CD4-positive, alpha-beta T cell (primary cell): ENCODE measurements at regions of chr19 and their contacts with region 1.

Region 1: DNA sequence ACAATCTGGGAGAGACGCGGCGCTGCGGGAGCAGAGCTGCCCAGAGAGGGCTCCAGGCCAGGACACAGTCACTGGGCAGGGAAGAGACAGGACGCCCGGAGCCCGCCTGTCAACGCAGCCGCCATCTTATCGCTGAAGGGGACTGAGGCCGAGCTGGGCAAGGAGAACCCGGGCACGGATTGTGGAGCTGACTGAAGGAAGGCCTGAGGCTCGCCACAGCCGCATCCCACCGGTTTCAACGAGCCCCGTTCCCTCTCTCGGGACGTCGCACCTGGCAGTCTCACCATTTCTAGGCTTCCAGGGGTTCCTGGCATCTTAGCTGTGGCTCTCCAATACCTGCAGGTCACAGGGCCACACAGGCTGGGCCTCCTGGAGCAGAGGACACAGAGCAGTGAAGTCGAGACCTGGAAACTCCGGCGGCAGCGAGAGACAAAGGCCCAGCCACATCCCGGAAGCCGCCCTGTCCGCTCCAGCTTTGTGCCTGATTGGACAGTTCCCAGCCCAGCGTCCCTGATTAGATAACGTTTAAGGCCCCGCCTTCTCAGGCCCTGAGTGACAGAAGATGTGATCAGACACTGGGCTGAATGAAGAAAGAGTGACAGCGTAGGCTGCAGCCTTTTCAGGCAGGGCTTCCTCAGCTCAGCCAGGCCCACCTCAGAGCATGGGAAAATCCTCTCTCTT is at the start of gene ZNF91:
- DNase-seq: peak; percentile 82 to 98 (median 85)
- ATAC-seq: peak; percentile 94
- H3K4me3 ChIP-seq: peak within 1 kb of the TSS; percentile 90
- H3K4me3 Mint-ChIP-seq: peak within 1 kb of the TSS; percentile 96
- H3K27ac ChIP-seq: peak within 1 kb of the TSS; percentile 88 to 95
- H3K27ac Mint-ChIP-seq: peak within 1 kb of the TSS; percentile 96
- H3K4me1 ChIP-seq: peaks cover 29% of the 10 kb centered on the region
- H3K4me1 Mint-ChIP-seq: peaks cover 50% of the 10 kb centered on the region
- H3K27me3 ChIP-seq: no peaks in the 10 kb centered on the region
- H3K27me3 Mint-ChIP-seq: no peaks in the 10 kb centered on the region
- CTCF ChIP-seq: no peak
- total RNA-seq, gene ZNF91: 95.5 to 99.3 TPM

Region 2: GRCh38 chr19:23249911-23250649 is 145.1 kb before region 1 on chr19 and contains the start of gene ZNF724:
- CTCF ChIA-PET with region 1: no interaction called
- POLR2A ChIA-PET with region 1: interaction called, 30 read pairs
- intact Hi-C with region 1: loop called in 1 of 2 experiments (anchors 10 kb)
- DNase-seq: peak; percentile 78 to 94 (median 82)
- ATAC-seq: peak; percentile 99
- H3K4me3 ChIP-seq: peak within 1 kb of the TSS; percentile 83
- H3K4me3 Mint-ChIP-seq: peak within 1 kb of the TSS; percentile 98
- H3K27ac ChIP-seq: peak within 1 kb of the TSS; percentile 29 to 55
- H3K27ac Mint-ChIP-seq: peak within 1 kb of the TSS; percentile 83
- H3K4me1 ChIP-seq: peaks cover 12% of the 10 kb centered on the region
- H3K4me1 Mint-ChIP-seq: peaks cover 13% of the 10 kb centered on the region
- H3K27me3 ChIP-seq: no peaks in the 10 kb centered on the region
- H3K27me3 Mint-ChIP-seq: no peaks in the 10 kb centered on the region
- CTCF ChIP-seq: no peak
- total RNA-seq, gene ZNF724: 4.2 to 5.5 TPM

Region 3: GRCh38 chr19:23440791-23441190 is 45.6 kb after region 1 on chr19:
- CTCF ChIA-PET with region 1: no interaction called
- POLR2A ChIA-PET with region 1: no interaction called
- intact Hi-C with region 1: loop called in 1 of 2 experiments (anchors 1 kb)
- DNase-seq: peak in 2 of 14 experiments; percentile 7 to 15
- ATAC-seq: no peak
- H3K4me3 ChIP-seq: no peak overlapping the region
- H3K4me3 Mint-ChIP-seq: no peak overlapping the region
- H3K27ac ChIP-seq: no peak overlapping the region
- H3K27ac Mint-ChIP-seq: no peak overlapping the region
- H3K4me1 ChIP-seq: no peaks in the 10 kb centered on the region
- H3K4me1 Mint-ChIP-seq: no peaks in the 10 kb centered on the region
- H3K27me3 ChIP-seq: no peaks in the 10 kb centered on the region
- H3K27me3 Mint-ChIP-seq: no peaks in the 10 kb centered on the region
- CTCF ChIP-seq: peak; percentile 20

Region 4: DNA sequence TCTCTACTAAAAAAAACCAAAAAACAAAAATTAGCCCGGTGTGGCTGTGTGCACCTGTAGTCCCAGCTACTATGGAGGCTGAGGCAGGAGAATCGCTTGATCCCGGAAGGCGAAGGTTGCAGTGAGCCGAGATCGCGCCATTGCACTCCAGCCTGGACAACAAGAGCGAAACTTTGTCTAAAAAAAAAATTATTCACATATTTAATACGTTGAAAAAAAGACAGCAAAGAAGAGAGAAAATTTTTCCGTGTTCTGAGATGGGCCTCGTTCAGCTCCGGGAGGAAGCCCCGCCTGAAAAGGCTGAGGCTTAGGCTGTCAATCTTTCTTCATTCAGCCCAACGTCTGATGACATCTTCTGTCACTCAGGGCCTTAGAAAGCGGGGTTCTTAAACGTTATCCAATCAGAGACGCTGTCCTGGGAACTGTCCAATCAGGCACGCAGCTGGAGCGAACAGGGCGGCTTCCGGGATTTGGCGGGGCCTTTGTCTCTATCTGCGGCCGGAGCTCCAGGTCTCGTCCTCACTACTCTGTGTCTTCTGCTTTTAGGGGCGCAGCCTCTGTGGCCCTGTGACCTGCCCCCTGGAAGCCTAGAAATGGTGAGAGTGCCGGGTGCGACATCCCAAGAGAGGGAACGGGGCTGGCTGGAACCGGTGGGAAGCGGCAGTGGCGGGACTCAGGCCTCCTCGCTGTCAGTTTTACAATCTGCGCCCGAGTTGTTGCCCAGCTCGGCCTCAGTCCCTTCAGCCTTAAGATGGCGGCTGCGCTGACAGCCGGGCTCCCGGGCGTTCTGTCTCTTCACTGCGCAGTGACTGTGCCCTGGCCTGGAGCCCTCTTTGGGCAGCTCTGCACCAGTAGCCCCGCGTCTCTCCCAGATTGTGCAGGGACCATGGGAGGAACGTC is 519.5 kb after region 1 on chr19 and contains the start of gene ZNF726:
- CTCF ChIA-PET with region 1: no interaction called
- POLR2A ChIA-PET with region 1: interaction called, 20 read pairs
- intact Hi-C with region 1: loop called (anchors 2 to 5 kb)
- DNase-seq: peak; percentile 72 to 95 (median 79)
- ATAC-seq: peak; percentile 99
- H3K4me3 ChIP-seq: peak within 1 kb of the TSS; percentile 74
- H3K4me3 Mint-ChIP-seq: peak within 1 kb of the TSS; percentile 98
- H3K27ac ChIP-seq: peak within 1 kb of the TSS in 1 of 2 donors; percentile 53
- H3K27ac Mint-ChIP-seq: peak within 1 kb of the TSS; percentile 87
- H3K4me1 ChIP-seq: peaks cover 16% of the 10 kb centered on the region
- H3K4me1 Mint-ChIP-seq: peaks cover 7% of the 10 kb centered on the region
- H3K27me3 ChIP-seq: no peaks in the 10 kb centered on the region
- H3K27me3 Mint-ChIP-seq: no peaks in the 10 kb centered on the region
- CTCF ChIP-seq: no peak
- total RNA-seq, gene ZNF726: 2.6 to 3.5 TPM